ENCODE measurements at regions of chr17 and their contacts with region 1.

Region 1: GRCh38 chr17:75896415-75897159 is at the start of gene TRIM65:
- DNase-seq: peak; percentile 56
- ATAC-seq: peak; percentile 18
- H3K4me3 ChIP-seq: peak within 1 kb of the TSS; percentile 68 to 83 (median 75)
- H3K27ac ChIP-seq: peak within 1 kb of the TSS; percentile 79
- H3K4me1 ChIP-seq: peaks cover 46% of the 10 kb centered on the region
- H3K27me3 ChIP-seq: no peaks in the 10 kb centered on the region
- CTCF ChIP-seq: peak; percentile 64
- EP300 ChIP-seq: no peak
- POLR2A ChIP-seq: peak in 1 of 2 experiments; percentile 92; a peak in 2 of 4 replicates
- RAD21 ChIP-seq: peak; percentile 84
- total RNA-seq, gene TRIM65: 22.4 and 24.6 TPM in 2 replicates

Region 2: GRCh38 chr17:75872434-75873351 is 23.9 kb before region 1 on chr17:
- CTCF ChIA-PET with region 1: interaction called, 5 read pairs
- POLR2A ChIA-PET with region 1: interaction called, 423 read pairs
- in situ Hi-C with region 1: no loop called
- intact Hi-C with region 1: loop called (anchors 1 kb)
- DNase-seq: peak; percentile 99
- ATAC-seq: peak; percentile 64
- H3K4me3 ChIP-seq: peak overlapping the region; percentile 13 to 62 (median 36); a peak in 5 of 6 replicates
- H3K27ac ChIP-seq: peak overlapping the region; percentile 97
- H3K4me1 ChIP-seq: peaks cover 88% of the 10 kb centered on the region
- H3K27me3 ChIP-seq: no peaks in the 10 kb centered on the region
- CTCF ChIP-seq: peak; percentile 43
- EP300 ChIP-seq: peak; percentile 81 to 87; a peak in 3 of 4 replicates
- POLR2A ChIP-seq: peak in 1 of 2 experiments; percentile 84; a peak in 2 of 4 replicates
- RAD21 ChIP-seq: peak; percentile 68

Region 3: GRCh38 chr17:76153640-76154039 is 257.1 kb after region 1 on chr17:
- CTCF ChIA-PET with region 1: no interaction called
- POLR2A ChIA-PET with region 1: no interaction called
- in situ Hi-C with region 1: no loop called
- intact Hi-C with region 1: no loop called
- DNase-seq: peak; percentile 58
- ATAC-seq: peak; percentile 71
- H3K4me3 ChIP-seq: no peak overlapping the region
- H3K27ac ChIP-seq: no peak overlapping the region
- H3K4me1 ChIP-seq: peaks cover 11% of the 10 kb centered on the region
- H3K27me3 ChIP-seq: peaks cover 0 to 17% of the 10 kb centered on the region in 2 experiments; a peak in 3 of 5 replicates
- CTCF ChIP-seq: peak; percentile 66
- EP300 ChIP-seq: no peak
- POLR2A ChIP-seq: no peak
- RAD21 ChIP-seq: peak; percentile 57

Measured in HepG2 (cell line).